ENCODE measurements at regions of chr4 and their contacts with region 1.

Region 1: DNA sequence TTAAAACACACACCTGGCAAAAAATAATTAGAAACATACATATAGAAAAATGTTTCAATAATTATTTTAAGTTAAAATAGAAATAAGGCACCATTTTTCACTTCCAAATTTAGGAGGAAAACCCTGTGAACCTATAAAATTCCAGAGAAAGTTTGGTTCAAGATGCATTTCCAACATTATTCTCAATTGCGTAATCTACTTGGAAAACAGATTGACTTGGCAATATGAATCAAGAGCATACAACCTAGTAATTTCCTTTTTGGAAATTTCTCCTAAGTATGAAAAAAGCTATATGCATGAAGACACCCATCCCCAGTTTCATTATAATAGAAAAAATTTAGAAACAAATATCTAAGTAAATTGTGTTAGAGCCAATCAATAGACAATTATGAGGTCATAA is 242.9 kb downstream of the IQCM start:
- DNase-seq: no peak
- H3K4me3 ChIP-seq: no peak overlapping the region
- H3K27ac ChIP-seq: no peak overlapping the region
- H3K4me1 ChIP-seq: no peaks in the 10 kb centered on the region
- H3K27me3 ChIP-seq: no peaks in the 10 kb centered on the region
- CTCF ChIP-seq: no peak

Region 2: GRCh38 chr4:149531861-149532260 is 40.9 kb before region 1 on chr4:
- dilution Hi-C with region 1: loop called (anchors 5 kb)
- DNase-seq: no peak
- H3K4me3 ChIP-seq: no peak overlapping the region
- H3K27ac ChIP-seq: no peak overlapping the region
- H3K4me1 ChIP-seq: no peaks in the 10 kb centered on the region
- H3K27me3 ChIP-seq: no peaks in the 10 kb centered on the region
- CTCF ChIP-seq: no peak

Region 3: DNA sequence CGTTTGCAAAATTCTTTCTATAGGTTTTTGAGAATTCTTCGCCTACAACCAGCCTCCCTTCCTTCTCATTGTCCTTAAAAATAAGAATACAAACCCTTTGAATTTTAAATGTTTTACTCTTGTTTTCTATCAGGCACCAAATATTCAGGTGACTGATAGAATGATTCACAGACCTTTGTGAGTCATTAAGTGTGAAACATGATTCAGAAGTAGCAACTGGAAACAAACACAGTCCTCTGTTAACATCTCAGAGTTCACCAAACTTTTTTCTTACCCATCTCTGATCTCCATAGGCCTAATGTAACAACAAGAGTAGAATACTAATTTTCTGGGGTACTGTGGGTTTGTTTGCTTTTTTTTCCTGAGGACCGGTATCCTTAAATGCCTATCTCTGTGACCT is 945.8 kb after region 1 on chr4:
- dilution Hi-C with region 1: no loop called
- DNase-seq: no peak
- H3K4me3 ChIP-seq: no peak overlapping the region
- H3K27ac ChIP-seq: peak overlapping the region; percentile 50
- H3K4me1 ChIP-seq: peaks cover 10% of the 10 kb centered on the region
- H3K27me3 ChIP-seq: no peaks in the 10 kb centered on the region
- CTCF ChIP-seq: no peak